ENCODE measurements at regions of chr10 and their contacts with region 1.

Region 1: DNA sequence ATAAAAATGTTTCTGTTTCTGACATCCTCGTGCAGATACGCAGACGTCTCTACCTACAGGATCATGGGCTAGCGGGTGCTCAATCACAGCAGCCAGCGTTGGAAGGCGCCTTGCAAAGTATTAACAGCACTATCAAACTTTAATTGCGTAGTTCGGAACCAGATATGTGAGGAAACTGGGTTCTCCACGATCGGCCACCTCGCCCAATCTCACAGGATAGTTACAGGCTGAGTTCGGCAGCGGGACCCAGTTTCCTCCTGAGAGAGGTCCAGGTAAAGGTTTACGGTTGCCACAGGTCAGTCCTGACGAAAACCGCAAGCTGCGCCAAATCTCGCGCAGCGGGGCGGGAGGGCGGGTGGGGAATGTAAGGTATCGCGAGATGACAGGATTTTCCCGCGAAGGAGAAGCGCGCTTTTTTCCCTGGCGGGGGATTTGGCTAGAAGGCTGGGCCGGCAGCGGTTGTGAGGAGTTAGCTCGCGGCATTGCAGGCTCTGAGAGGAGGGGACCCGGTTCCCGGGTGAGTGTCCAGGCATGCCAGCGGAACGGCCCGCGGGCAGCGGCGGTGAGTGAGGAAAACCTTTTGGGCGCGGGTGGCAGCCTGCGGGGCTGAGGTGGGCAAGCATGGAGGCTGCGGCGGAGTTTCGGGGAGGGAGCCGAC is at the start of gene HELLS:
- DNase-seq: peak; percentile 88
- H3K4me3 Mint-ChIP-seq: peak within 1 kb of the TSS; percentile 98
- H3K27ac Mint-ChIP-seq: peak within 1 kb of the TSS; percentile 93
- H3K4me1 Mint-ChIP-seq: peaks cover 21% of the 10 kb centered on the region
- H3K27me3 Mint-ChIP-seq: no peaks in the 10 kb centered on the region
- total RNA-seq, gene HELLS: 135 to 141 TPM

Region 2: GRCh38 chr10:93893646-93894515 is 651.6 kb before region 1 on chr10 and contains the start of gene SLC35G1:
- CTCF ChIA-PET with region 1: no interaction called
- POLR2A ChIA-PET with region 1: no interaction called
- intact Hi-C with region 1: loop called (anchors 5 kb)
- DNase-seq: peak; percentile 80
- H3K4me3 Mint-ChIP-seq: peak within 1 kb of the TSS; percentile 76
- H3K27ac Mint-ChIP-seq: no peak within 1 kb of the TSS
- H3K4me1 Mint-ChIP-seq: peaks cover 30% of the 10 kb centered on the region
- H3K27me3 Mint-ChIP-seq: peaks cover 11% of the 10 kb centered on the region
- total RNA-seq, gene SLC35G1: 2.8 to 3.0 TPM

Region 3: DNA sequence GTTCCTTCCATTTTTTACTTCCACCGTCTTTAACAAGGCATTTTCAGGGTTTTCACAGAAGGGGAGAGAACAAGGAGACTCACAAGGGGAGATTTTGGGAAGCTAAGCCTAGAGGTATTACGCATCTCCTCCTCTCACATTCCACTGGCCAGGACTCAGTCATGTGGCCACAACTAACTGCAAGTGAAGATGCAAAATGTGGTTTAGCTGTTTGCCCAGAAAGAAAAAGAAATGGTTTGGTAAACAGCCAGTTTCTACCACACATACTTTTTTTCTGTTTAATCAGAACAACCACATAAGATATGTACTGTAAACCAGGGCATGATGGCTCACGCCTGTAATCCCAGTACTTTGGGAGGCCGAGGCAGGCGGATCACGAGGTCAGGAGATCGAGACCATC is 21.4 kb before region 1 on chr10:
- CTCF ChIA-PET with region 1: no interaction called
- POLR2A ChIA-PET with region 1: no interaction called
- intact Hi-C with region 1: loop called (anchors 1 kb)
- DNase-seq: no peak
- H3K4me3 Mint-ChIP-seq: no peak overlapping the region
- H3K27ac Mint-ChIP-seq: no peak overlapping the region
- H3K4me1 Mint-ChIP-seq: no peaks in the 10 kb centered on the region
- H3K27me3 Mint-ChIP-seq: peaks cover 8% of the 10 kb centered on the region

Region 4: GRCh38 chr10:94607111-94607510 is 61.6 kb after region 1 on chr10:
- CTCF ChIA-PET with region 1: no interaction called
- POLR2A ChIA-PET with region 1: interaction called, 5 read pairs
- intact Hi-C with region 1: loop called (anchors 1 kb)
- DNase-seq: no peak
- H3K4me3 Mint-ChIP-seq: no peak overlapping the region
- H3K27ac Mint-ChIP-seq: peak overlapping the region; percentile 72
- H3K4me1 Mint-ChIP-seq: peaks cover 23% of the 10 kb centered on the region
- H3K27me3 Mint-ChIP-seq: no peaks in the 10 kb centered on the region